Heart left ventricle (tissue), 16 donors: ENCODE measurements at regions of chr11 and their contacts with region 1.

Region 1: DNA sequence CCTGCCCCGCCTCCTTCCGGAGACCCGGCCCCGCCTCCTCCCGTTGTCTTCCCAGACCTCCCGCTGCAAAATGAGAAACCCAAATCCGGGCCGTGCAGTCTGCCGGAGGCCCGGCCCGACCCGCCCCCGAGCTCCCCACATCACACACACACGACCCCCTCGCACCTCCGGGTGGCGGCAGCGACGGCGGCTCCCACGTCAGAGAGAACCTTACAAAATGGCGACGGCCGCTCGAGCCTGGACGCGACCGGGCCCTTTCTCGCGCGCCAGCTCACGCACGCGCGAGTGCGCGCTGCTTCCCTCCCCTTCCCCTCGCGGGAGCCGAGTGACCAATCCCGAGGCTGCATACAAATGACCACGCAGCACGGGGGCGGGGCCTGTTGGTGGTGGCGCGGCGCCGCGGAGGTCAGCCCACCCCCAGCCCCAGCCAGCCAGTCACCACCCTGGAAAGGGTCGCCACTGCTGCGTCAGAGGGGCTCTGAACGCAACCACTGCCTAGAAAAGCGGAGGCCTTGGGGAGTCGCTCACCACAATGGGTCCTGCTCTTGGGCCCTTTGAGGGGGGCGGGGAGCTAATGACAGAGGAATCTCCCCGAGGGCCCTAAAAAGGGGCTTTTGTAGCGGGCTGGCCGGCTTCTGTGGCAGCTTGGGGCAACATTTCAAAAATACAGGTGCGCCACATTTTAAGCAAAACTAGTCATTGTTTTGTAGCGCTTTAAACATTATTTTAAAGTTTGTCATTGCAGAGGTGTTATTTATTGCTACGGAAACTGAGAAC is at the start of gene RBM4B:
- DNase-seq: peak; percentile 96 to 98 (median 97)
- ATAC-seq: peak; percentile 98 to 99 (median 98)
- H3K4me3 ChIP-seq: peak within 1 kb of the TSS; percentile 56 to 83 (median 72)
- H3K27ac ChIP-seq: peak within 1 kb of the TSS; percentile 84 to 98 (median 92)
- H3K4me1 ChIP-seq: peaks cover 0 to 48% (median 26%) of the 10 kb centered on the region in 12 donors
- H3K27me3 ChIP-seq: no peaks in the 10 kb centered on the region
- CTCF ChIP-seq: no peak
- POLR2A ChIP-seq: peak; percentile 70 to 91
- total RNA-seq, gene RBM4B: 8.4 to 13.3 (median 10.0) TPM

Region 2: DNA sequence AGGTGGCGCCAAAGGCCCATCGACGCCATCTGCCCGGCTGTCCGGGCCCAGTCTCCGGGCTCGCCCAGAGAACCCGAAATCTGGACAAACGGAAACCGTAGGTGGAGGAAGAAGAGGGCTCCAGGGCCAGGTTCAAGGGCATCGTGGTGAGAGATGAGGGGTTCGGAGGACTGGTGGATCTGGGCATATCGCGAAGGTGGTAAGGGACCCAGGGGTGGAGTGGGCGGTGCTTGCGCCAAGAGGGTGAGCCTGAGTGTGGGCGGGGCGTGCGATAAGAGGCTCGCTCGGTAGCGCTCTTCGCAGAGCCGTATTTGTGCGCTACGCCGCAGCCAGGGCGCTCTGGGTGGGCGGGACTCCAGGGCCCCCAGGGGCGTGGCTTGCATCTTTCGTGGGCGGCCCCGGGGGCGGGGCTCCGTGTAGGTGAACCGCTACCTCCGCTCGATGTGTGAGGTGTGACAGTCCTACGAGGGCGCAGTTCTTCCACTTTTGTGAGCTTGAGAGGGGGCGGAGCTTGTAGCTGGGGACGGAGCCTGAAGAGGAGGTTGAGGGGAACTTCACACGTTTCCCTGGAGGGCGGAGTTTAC is 365.7 kb before region 1 on chr11:
- intact Hi-C with region 1: loop called in 1 of 10 experiments (anchors 5 kb)
- DNase-seq: peak; percentile 92 to 96 (median 93)
- ATAC-seq: peak; percentile 80 to 87 (median 82)
- H3K4me3 ChIP-seq: peak overlapping the region; percentile 18 to 66 (median 62)
- H3K27ac ChIP-seq: peak overlapping the region; percentile 53 to 94 (median 84)
- H3K4me1 ChIP-seq: peaks cover 0 to 37% (median 18%) of the 10 kb centered on the region in 12 donors
- H3K27me3 ChIP-seq: no peaks in the 10 kb centered on the region
- CTCF ChIP-seq: peak in 11 of 12 donors; percentile 9 to 98 (median 87)
- POLR2A ChIP-seq: peak in 1 of 2 donors; percentile 42

Region 3: GRCh38 chr11:66418168-66418985 is 259.4 kb before region 1 on chr11:
- intact Hi-C with region 1: loop called in 1 of 10 experiments (anchors 5 kb)
- DNase-seq: peak; percentile 78 to 91 (median 83)
- ATAC-seq: peak; percentile 94 to 98 (median 94)
- H3K4me3 ChIP-seq: no peak overlapping the region
- H3K27ac ChIP-seq: peak overlapping the region in 3 of 12 donors; percentile 35 to 72 (median 68)
- H3K4me1 ChIP-seq: peaks cover 0 to 53% (median 25%) of the 10 kb centered on the region in 12 donors
- H3K27me3 ChIP-seq: peaks cover 0 to 29% (median 3%) of the 10 kb centered on the region in 9 donors
- CTCF ChIP-seq: peak in 7 of 12 donors; percentile 39 to 58 (median 40)
- POLR2A ChIP-seq: no peak

Region 4: GRCh38 chr11:66592457-66593302 is 85.1 kb before region 1 on chr11 and contains the starts of genes CCDC87 and CCS:
- intact Hi-C with region 1: loop called in 6 of 10 experiments (anchors 1 to 5 kb)
- DNase-seq: peak; percentile 97 to 100 (median 98)
- ATAC-seq: peak; percentile 97 to 99 (median 98)
- H3K4me3 ChIP-seq: peak within 1 kb of the TSS; percentile 42 to 80 (median 68)
- H3K27ac ChIP-seq: peak within 1 kb of the TSS; percentile 24 to 91 (median 80)
- H3K4me1 ChIP-seq: peaks cover 2 to 38% (median 28%) of the 10 kb centered on the region in 12 donors
- H3K27me3 ChIP-seq: no peaks in the 10 kb centered on the region
- CTCF ChIP-seq: peak; percentile 48 to 86 (median 64)
- POLR2A ChIP-seq: peak; percentile 28 to 97
- total RNA-seq, gene CCDC87: 0.14 to 0.63 (median 0.36) TPM
- total RNA-seq, gene CCS: 13.9 to 26.7 (median 19.1) TPM

Region 5: DNA sequence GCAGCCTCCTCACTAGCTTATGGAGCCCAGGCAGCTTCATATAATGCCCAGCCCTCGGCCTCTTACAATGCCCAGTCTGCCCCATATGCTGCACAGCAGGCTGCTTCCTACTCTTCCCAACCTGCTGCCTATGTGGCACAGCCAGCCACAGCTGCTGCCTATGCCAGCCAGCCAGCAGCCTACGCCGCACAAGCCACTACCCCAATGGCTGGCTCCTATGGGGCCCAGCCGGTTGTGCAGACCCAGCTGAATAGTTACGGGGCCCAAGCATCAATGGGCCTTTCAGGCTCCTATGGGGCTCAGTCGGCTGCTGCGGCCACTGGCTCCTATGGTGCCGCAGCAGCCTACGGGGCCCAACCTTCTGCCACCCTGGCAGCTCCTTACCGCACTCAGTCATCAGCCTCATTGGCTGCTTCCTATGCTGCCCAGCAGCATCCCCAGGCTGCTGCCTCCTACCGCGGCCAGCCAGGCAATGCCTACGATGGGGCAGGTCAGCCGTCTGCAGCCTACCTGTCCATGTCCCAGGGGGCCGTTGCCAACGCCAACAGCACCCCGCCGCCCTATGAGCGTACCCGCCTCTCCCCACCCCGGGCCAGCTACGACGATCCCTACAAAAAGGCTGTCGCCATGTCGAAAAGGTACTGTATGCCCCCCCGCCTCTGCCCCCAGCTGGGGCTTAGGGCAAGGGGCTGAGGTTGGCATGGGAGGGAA is 52.6 kb before region 1 on chr11:
- intact Hi-C with region 1: loop called in 2 of 10 experiments (anchors 10 kb)
- DNase-seq: no peak
- ATAC-seq: no peak
- H3K4me3 ChIP-seq: no peak overlapping the region
- H3K27ac ChIP-seq: peak overlapping the region in 1 of 12 donors; percentile 98
- H3K4me1 ChIP-seq: peaks cover 6 to 64% (median 51%) of the 10 kb centered on the region in 12 donors
- H3K27me3 ChIP-seq: no peaks in the 10 kb centered on the region
- CTCF ChIP-seq: no peak
- POLR2A ChIP-seq: no peak

Region 6: DNA sequence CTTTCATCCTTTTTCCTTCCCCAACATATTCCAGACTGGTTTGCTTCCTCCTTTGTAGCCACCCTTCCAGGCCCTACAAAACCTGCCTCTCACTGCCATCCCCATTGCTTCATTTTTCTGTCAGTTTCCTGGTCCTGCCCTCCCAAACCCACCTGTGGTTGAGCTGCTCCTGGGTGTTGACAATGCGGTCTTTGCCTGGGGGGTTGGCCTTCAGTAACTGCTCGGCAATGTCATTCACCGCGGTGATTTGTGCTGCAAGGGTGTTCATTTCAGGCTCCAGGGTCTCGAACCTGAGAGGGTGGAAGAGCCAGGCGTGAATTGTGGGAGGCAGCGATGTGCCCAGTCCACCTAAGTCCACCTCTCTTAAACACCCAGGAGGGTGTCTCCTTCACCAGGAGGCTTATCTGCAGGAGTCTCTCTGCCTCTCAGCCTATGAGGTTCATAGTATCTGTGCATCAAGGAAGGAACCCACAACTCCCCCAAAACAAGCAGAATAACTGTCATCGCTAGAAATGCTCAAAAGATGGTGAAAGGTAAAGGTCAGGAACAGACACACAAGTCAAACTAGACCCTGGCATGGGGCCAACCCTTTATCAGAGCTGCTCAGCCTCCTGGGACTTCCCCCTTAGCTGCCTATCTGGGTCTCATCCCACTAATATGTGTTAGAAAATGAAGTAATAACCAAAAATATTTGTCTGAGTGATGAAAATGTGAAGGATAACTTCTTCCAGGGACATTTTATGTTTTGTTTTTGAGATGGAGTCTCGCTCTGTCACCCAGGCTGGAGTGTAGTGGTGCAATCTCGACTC is 23.8 kb after region 1 on chr11:
- intact Hi-C with region 1: no loop called
- DNase-seq: no peak
- ATAC-seq: no peak
- H3K4me3 ChIP-seq: no peak overlapping the region
- H3K27ac ChIP-seq: no peak overlapping the region
- H3K4me1 ChIP-seq: no peaks in the 10 kb centered on the region
- H3K27me3 ChIP-seq: no peaks in the 10 kb centered on the region
- CTCF ChIP-seq: no peak
- POLR2A ChIP-seq: no peak

Region 7: GRCh38 chr11:66950113-66950535 is 272.3 kb after region 1 on chr11:
- intact Hi-C with region 1: no loop called
- DNase-seq: no peak
- ATAC-seq: peak in 3 of 4 donors; percentile 16 to 57 (median 36)
- H3K4me3 ChIP-seq: no peak overlapping the region
- H3K27ac ChIP-seq: no peak overlapping the region
- H3K4me1 ChIP-seq: peaks cover 0 to 3% (median 0%) of the 10 kb centered on the region in 12 donors
- H3K27me3 ChIP-seq: no peaks in the 10 kb centered on the region
- CTCF ChIP-seq: no peak
- POLR2A ChIP-seq: no peak